ENCODE measurements at regions of chr4 and their contacts with region 1.

Region 1: GRCh38 chr4:88033309-88033708 is 25.9 kb downstream of the PKD2 start:
- DNase-seq: no peak
- ATAC-seq: peak in 1 of 2 donors; percentile 51

Region 2: DNA sequence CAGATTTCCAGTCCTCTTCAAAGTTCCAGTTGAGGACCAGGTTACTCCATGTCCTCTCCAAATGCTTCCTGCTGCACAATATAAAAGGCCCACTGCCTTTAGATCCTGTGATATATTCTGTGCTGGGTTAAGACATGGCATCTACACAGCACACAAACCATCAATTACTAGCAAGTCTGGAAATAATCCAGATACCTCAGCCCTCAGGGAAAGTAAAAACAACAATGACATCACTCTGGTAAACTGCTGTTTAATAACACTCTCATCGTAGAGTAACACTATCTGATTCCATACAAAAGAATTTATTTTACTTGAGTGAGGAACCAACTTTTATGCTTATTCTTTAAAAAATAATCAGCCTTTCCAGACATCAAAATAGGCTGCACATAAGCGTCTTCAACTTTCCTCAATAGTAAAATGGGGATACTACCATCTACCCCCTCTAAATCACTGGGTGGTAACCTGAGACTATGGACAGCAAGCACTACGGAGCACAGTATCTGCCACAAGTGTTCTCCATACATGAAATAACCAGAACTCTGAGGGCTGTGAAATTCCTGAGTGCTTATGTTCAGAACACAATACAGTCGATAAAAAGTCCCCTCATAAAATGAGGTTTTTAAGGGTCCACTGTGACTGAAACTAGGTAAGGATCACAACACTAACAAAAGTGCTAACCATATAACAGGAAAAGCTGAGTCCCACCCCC is 71.7 kb after region 1 on chr4:
- intact Hi-C with region 1: no loop called
- DNase-seq: no peak
- ATAC-seq: no peak

Region 3: DNA sequence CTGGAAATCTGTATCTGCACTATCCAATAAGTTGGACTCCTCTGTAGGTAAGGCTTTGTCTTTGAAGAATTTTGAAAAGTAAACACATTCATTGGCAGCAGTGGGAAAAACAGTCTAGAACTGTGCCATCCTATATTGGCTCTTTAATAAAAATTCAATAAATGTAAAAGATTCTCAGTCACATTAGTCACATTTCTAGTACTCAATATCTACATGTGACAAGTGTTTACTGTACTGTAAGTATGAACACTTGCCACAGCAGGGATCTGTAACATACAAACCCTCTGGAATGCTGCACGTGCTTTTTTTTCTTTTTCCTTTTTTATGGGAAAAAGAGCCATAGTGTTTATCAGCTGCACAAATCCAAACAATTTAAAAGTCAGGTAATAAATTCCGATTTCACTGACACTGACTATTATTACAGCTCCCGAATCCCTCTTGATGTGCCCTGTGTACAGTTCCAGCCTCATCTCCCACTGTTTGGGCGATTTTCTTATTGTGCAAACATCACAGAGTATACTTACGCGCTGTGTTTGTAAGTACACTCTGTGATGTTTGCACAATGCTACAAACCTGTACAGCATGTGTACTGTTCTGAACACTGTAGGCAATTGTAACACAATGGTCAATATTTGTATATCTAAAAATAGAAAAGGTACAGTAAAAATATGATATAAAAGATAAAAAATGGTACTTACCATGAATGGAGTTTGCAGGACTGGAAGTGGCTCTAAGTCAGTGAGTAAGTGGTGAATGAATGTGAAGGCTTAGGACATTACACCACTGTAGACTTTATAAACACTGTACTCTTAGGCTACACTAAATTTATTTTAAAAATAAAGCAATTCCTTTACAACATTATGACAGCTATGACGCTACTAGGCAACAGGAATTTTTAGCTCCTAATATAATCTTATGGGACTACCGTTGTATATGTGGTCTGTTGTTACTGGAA is 481.5 kb after region 1 on chr4:
- intact Hi-C with region 1: loop called in 1 of 2 experiments (anchors 10 kb)
- DNase-seq: no peak
- ATAC-seq: no peak

Measured in left cardiac atrium (tissue), 4 donors.